WTC11 (cell line): ENCODE measurements at regions of chr17 and their contacts with region 1.

Region 1: DNA sequence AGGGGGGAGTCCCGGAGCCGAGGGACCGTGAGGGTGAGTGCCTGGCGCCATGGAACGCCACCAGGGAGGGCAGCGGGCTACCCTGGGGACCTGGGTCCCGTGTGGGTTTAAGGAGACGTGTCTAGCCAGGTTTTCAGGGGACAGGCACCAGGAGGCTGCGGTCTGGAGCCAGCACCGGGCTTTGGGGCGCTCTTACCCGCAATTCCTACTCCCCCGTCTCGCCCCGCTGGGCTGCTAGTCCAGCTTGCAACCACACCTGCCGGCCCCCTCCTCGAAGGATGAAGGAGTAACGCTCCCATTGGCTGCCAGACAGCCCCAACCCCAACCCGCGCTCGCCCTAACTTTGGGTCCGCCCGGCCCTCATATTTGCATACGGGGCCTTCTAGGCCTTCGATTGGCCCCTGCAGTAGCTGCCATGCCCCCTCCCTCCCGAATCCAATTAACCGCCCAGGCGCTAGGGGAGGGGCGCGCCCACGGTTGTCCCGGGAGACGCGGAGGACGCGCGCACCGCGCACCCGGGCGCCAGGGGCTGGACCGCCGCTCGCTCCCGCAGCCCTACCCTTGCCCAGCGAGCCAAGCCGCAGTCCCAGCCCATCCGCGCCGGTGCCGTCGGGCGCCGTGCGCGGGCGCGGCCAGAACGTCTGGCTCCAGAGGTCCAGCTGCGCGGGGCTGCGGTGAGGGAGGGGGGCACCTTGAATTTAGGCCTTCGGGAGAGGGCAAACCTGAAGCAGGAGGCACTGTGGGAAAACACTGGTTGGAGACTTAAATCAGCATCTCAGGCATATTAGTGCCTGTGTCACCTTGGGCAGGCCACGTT is at the start of gene TTLL6:
- DNase-seq: peak; percentile 97
- ATAC-seq: peak; percentile 95
- H3K4me3 Mint-ChIP-seq: peak within 1 kb of the TSS; percentile 94
- H3K27ac Mint-ChIP-seq: peak within 1 kb of the TSS; percentile 92
- H3K4me1 Mint-ChIP-seq: peaks cover 44% of the 10 kb centered on the region
- H3K27me3 Mint-ChIP-seq: peaks cover 5% of the 10 kb centered on the region; the same call in 1 of the 2 replicates
- CTCF ChIP-seq: no peak
- total RNA-seq, gene TTLL6: 3.4 to 7.0 TPM (median 4.6 TPM) in 3 replicates

Region 2: GRCh38 chr17:48429638-48430586 is 387.1 kb before region 1 on chr17 and contains the start of gene SKAP1:
- CTCF ChIA-PET with region 1: no interaction called
- POLR2A ChIA-PET with region 1: no interaction called
- DNase-seq: peak; percentile 68
- ATAC-seq: peak; percentile 95
- H3K4me3 Mint-ChIP-seq: peak within 1 kb of the TSS; percentile 62
- H3K27ac Mint-ChIP-seq: no peak within 1 kb of the TSS
- H3K4me1 Mint-ChIP-seq: peaks cover 12% of the 10 kb centered on the region
- H3K27me3 Mint-ChIP-seq: peaks cover 57% of the 10 kb centered on the region
- CTCF ChIP-seq: no peak
- total RNA-seq, gene SKAP1: 0.30 to 0.57 TPM in 2 of 3 replicates, not detected in the other

Region 3: GRCh38 chr17:48830840-48831548 is 14.0 kb after region 1 on chr17 and contains the start of gene CALCOCO2:
- CTCF ChIA-PET with region 1: interaction called, 13 read pairs
- POLR2A ChIA-PET with region 1: no interaction called
- DNase-seq: peak; percentile 91
- ATAC-seq: peak; percentile 96
- H3K4me3 Mint-ChIP-seq: peak within 1 kb of the TSS; percentile 96
- H3K27ac Mint-ChIP-seq: peak within 1 kb of the TSS; percentile 98
- H3K4me1 Mint-ChIP-seq: peaks cover 3% of the 10 kb centered on the region; the same call in 1 of the 2 replicates
- H3K27me3 Mint-ChIP-seq: no peaks in the 10 kb centered on the region; the same call in 1 of the 2 replicates
- CTCF ChIP-seq: no peak
- total RNA-seq, gene CALCOCO2: 27.0 to 32.6 TPM (median 31.2 TPM) in 3 replicates

Region 4: GRCh38 chr17:48927978-48928732 is 111.2 kb after region 1 on chr17:
- CTCF ChIA-PET with region 1: no interaction called
- POLR2A ChIA-PET with region 1: no interaction called
- DNase-seq: no peak
- ATAC-seq: peak; percentile 37
- H3K4me3 Mint-ChIP-seq: no peak overlapping the region
- H3K27ac Mint-ChIP-seq: peak overlapping the region; percentile 3; the same call in 1 of the 2 replicates
- H3K4me1 Mint-ChIP-seq: no peaks in the 10 kb centered on the region
- H3K27me3 Mint-ChIP-seq: no peaks in the 10 kb centered on the region
- CTCF ChIP-seq: no peak